ENCODE measurements at regions of chr9 and their contacts with region 1.

Region 1: DNA sequence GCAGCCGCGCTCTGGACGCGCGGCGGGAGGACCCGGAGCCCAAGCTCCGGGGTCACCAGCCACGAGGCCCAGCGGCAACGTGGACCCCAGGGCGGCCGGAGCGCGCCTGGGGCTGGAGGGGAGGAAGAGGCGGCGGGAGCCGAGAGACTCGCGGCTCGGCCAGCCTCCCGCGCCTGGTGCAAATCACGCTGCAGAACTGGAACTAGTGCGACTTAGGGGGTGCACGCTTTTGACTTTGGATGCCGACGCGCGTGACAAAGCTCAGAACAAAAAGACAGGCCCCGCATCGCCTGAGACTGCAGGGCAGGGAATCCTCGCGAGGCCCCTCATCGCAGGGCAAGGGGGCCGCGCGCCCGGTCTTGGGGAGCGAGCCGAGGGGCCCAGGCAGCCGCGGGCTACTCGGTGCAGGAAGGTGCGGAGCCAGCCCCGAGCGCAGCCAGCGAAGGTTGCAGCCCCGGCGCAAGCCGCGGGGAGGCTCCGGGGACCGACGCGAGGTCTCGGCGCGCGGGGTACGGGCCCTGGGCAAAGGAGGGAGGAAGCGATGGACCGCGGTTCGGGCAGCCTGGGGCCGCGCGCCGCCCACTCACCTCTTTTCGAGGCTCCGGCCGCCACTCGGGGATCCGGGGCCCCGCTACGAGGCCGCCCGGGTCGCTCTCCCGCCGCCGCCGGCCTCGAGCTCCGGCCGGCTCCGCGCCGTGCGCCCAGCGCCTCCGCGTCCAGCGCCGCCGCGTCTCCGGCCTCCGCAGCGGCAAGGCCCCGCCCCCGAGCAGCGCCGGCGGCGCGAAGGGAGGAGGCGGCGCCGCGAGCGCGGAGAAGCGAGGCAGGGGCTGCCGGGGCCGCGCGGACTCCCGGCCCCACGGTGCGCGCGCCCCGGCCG is at the start of gene GOLM1:
- DNase-seq: peak; percentile 61
- ATAC-seq: peak; percentile 87
- H3K4me3 Mint-ChIP-seq: peak within 1 kb of the TSS; percentile 71
- H3K27ac Mint-ChIP-seq: peak within 1 kb of the TSS; percentile 68
- H3K4me1 Mint-ChIP-seq: peaks cover 9% of the 10 kb centered on the region
- H3K27me3 Mint-ChIP-seq: peaks cover 43% of the 10 kb centered on the region
- total RNA-seq, gene GOLM1: 1.2 to 1.4 TPM

Region 2: GRCh38 chr9:85940832-85941621 is 158.0 kb before region 1 on chr9 and contains the start of gene NAA35:
- CTCF ChIA-PET with region 1: no interaction called
- POLR2A ChIA-PET with region 1: no interaction called
- intact Hi-C with region 1: loop called in 1 of 2 experiments (anchors 2 kb)
- DNase-seq: peak; percentile 99
- ATAC-seq: peak; percentile 88
- H3K4me3 Mint-ChIP-seq: no peak within 1 kb of the TSS
- H3K27ac Mint-ChIP-seq: peak within 1 kb of the TSS; percentile 95
- H3K4me1 Mint-ChIP-seq: peaks cover 8% of the 10 kb centered on the region
- H3K27me3 Mint-ChIP-seq: no peaks in the 10 kb centered on the region
- total RNA-seq, gene NAA35: 24.9 to 25.8 TPM

Region 3: GRCh38 chr9:86082870-86083269 is 16.2 kb before region 1 on chr9:
- CTCF ChIA-PET with region 1: no interaction called
- POLR2A ChIA-PET with region 1: no interaction called
- intact Hi-C with region 1: no loop called
- DNase-seq: no peak
- ATAC-seq: no peak
- H3K4me3 Mint-ChIP-seq: no peak overlapping the region
- H3K27ac Mint-ChIP-seq: no peak overlapping the region
- H3K4me1 Mint-ChIP-seq: no peaks in the 10 kb centered on the region
- H3K27me3 Mint-ChIP-seq: peaks cover 7% of the 10 kb centered on the region

Measured in activated CD4-positive, alpha-beta T cell treated with anti-CD3 and anti-CD28 coated beads for 36 hours (primary cell).